ENCODE measurements at regions of chr7 and their contacts with region 1.

Region 1: DNA sequence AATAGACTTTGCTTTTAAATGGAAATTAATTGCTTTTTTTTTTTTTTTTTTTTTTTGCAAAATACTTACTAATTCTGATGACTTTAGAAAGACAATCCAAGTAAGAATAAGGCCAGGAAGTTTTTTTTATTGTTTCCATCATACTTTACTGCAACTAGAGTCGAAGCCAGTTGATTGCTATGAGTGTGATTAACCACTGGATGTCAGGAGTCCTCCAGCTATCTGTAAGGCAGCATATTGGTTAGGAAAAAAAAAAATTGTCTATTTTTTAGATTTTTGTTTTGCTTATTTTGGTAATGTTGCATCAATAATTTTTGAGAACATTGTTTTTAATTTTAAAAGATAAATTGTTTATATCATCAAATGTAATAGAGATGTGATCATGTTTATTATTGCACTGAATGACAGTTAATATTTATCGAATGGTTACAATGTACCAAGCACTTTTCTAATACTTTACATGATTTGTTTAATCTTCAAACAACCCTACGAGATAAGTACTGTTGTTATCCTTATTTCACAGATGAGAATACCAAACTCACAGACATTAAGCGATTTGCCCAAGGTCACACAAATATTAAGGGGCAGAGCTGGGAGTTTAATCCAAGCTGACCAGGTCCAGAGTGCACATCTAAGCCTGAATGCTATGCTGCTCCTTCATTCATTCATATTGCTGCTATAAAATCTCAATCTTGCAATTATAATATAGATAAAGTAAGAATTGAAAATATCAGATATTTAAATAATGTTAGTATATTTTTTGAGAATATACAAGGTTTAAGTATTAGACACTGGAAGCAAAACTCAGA is 19.9 kb upstream of the LMOD2 start:
- H3K4me3 ChIP-seq: no peak overlapping the region
- H3K27ac ChIP-seq: no peak overlapping the region
- H3K4me1 ChIP-seq: no peaks in the 10 kb centered on the region
- CTCF ChIP-seq: peak; percentile 13; the same call in 1 of the 2 replicates

Region 2: DNA sequence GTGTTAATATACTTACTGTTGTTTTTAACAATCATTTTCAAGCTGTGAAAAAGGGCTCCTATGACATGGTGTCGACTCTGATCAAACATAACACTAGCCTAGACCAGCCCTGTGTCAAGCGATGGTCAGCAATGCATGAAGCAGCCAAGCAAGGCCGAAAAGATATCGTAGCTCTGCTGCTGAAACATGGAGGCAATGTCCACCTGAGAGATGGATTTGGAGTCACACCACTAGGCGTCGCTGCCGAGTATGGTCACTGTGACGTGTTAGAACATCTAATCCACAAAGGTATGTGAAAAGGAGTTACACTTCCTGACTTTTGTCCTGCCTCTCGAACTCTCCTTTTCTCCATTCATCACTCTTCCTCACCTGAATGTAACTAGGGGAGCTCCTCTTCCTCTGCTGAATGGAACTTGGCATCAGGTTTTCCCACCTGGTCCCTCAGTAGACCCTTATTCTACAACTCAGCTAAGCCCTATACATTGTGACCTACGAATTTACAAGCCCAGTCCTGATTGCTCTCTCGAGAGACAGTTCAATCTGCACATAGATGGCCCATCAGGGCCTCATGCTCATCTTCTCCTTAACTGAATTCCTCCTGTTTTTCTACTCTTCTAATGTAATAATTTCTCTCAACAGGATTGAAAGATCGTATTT is 11.1 kb before region 1 on chr7:
- CTCF ChIA-PET with region 1: interaction called, 25 read pairs
- POLR2A ChIA-PET with region 1: no interaction called
- H3K4me3 ChIP-seq: no peak overlapping the region
- H3K27ac ChIP-seq: no peak overlapping the region
- H3K4me1 ChIP-seq: 0 out of 2 replicates have a peak, but pooled peaks cover 4% of the 10 kb centered on the region
- CTCF ChIP-seq: peak; percentile 26; the same call in 1 of the 2 replicates

Region 3: GRCh38 chr7:123705211-123705901 is 69.6 kb after region 1 on chr7:
- CTCF ChIA-PET with region 1: interaction called, 15 read pairs
- POLR2A ChIA-PET with region 1: no interaction called
- H3K4me3 ChIP-seq: no peak overlapping the region
- H3K27ac ChIP-seq: no peak overlapping the region
- H3K4me1 ChIP-seq: peaks cover 5% of the 10 kb centered on the region; the same call in 1 of the 2 replicates
- CTCF ChIP-seq: no peak